Caco-2 (cell line): ENCODE measurements at regions of chrX and their contacts with region 1.

Region 1: GRCh38 chrX:13688958-13689740 is at the start of gene RAB9A:
- DNase-seq: peak; percentile 86 to 92
- H3K4me3 ChIP-seq: peak within 1 kb of the TSS; percentile 76
- H3K4me3 Mint-ChIP-seq: peak within 1 kb of the TSS; percentile 84
- H3K27ac Mint-ChIP-seq: peak within 1 kb of the TSS; percentile 86
- H3K4me1 ChIP-seq: no peaks in the 10 kb centered on the region; the same call in 1 of the 2 replicates
- H3K4me1 Mint-ChIP-seq: peaks cover 20% of the 10 kb centered on the region
- H3K27me3 ChIP-seq: no peaks in the 10 kb centered on the region
- H3K27me3 Mint-ChIP-seq: no peaks in the 10 kb centered on the region
- CTCF ChIP-seq: peak in 1 of 2 experiments; percentile 10
- total RNA-seq, gene RAB9A: 22.9 and 25.5 TPM in 2 replicates

Region 2: DNA sequence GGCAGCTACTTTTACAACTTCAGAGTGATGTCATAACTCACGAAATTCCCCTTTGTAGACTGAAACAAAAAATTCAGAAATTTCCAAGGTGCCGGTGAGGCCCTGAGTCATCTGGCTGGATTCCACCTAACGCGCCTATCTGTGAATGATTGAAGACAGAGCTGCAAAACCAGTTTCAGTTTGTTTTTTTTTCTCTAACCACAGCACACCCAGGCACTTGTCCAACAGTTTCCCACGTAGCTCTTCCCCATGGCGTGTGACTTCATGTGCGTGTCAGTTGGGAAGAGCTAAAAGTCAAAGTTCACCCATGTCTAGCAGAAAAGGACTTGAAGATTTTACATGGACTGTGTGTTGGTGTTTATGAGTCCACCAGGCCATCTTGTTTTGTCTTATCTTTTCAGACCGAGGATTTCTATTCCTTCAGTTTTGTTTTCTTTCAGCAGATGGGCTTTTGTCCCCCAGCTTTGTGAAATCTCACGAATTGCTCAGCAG is 19.9 kb before region 1 on chrX:
- CTCF ChIA-PET with region 1: no interaction called
- POLR2A ChIA-PET with region 1: interaction called, 5 read pairs
- intact Hi-C with region 1: loop called (anchors 1 kb)
- DNase-seq: peak; percentile 82 to 86
- H3K4me3 ChIP-seq: no peak overlapping the region
- H3K4me3 Mint-ChIP-seq: peak overlapping the region; percentile 55
- H3K27ac Mint-ChIP-seq: peak overlapping the region; percentile 85
- H3K4me1 ChIP-seq: peaks cover 27% of the 10 kb centered on the region
- H3K4me1 Mint-ChIP-seq: peaks cover 12% of the 10 kb centered on the region
- H3K27me3 ChIP-seq: no peaks in the 10 kb centered on the region
- H3K27me3 Mint-ChIP-seq: no peaks in the 10 kb centered on the region
- CTCF ChIP-seq: no peak

Region 3: GRCh38 chrX:14164828-14165227 is 475.7 kb after region 1 on chrX:
- CTCF ChIA-PET with region 1: no interaction called
- POLR2A ChIA-PET with region 1: no interaction called
- intact Hi-C with region 1: no loop called
- DNase-seq: no peak
- H3K4me3 ChIP-seq: no peak overlapping the region
- H3K4me3 Mint-ChIP-seq: no peak overlapping the region
- H3K27ac Mint-ChIP-seq: no peak overlapping the region
- H3K4me1 ChIP-seq: no peaks in the 10 kb centered on the region
- H3K4me1 Mint-ChIP-seq: no peaks in the 10 kb centered on the region
- H3K27me3 ChIP-seq: no peaks in the 10 kb centered on the region
- H3K27me3 Mint-ChIP-seq: no peaks in the 10 kb centered on the region
- CTCF ChIP-seq: no peak